T-cell (primary cell): ENCODE measurements at regions of chr16 and their contacts with region 1.

Region 1: GRCh38 chr16:78478267-78478861 is 378.9 kb downstream of the WWOX start:
- DNase-seq: peak in 5 of 35 experiments; percentile 1 to 42 (median 15)
- ATAC-seq: peak in 1 of 4 experiments; percentile 68
- H3K4me3 ChIP-seq: no peak overlapping the region
- H3K4me3 Mint-ChIP-seq: no peak overlapping the region
- H3K27ac ChIP-seq: no peak overlapping the region
- H3K27ac Mint-ChIP-seq: no peak overlapping the region
- H3K4me1 ChIP-seq: no peaks in the 10 kb centered on the region
- H3K4me1 Mint-ChIP-seq: peaks cover 0 to 2% (median 0%) of the 10 kb centered on the region in 3 donors
- H3K27me3 ChIP-seq: no peaks in the 10 kb centered on the region
- H3K27me3 Mint-ChIP-seq: no peaks in the 10 kb centered on the region

Region 2: GRCh38 chr16:79045191-79045590 is 566.8 kb after region 1 on chr16:
- CTCF ChIA-PET with region 1: no interaction called
- POLR2A ChIA-PET with region 1: interaction called in 1 of 2 experiments, 14 read pairs
- DNase-seq: no peak
- ATAC-seq: no peak
- H3K4me3 ChIP-seq: no peak overlapping the region
- H3K4me3 Mint-ChIP-seq: no peak overlapping the region
- H3K27ac ChIP-seq: no peak overlapping the region
- H3K27ac Mint-ChIP-seq: no peak overlapping the region
- H3K4me1 ChIP-seq: peaks cover 11 to 12% of the 10 kb centered on the region in 2 experiments
- H3K4me1 Mint-ChIP-seq: peaks cover 21 to 27% (median 24%) of the 10 kb centered on the region in 3 donors
- H3K27me3 ChIP-seq: no peaks in the 10 kb centered on the region
- H3K27me3 Mint-ChIP-seq: no peaks in the 10 kb centered on the region